Astrocyte of the cerebellum (primary cell): ENCODE measurements at regions of chr9 and their contacts with region 1.

Region 1: DNA sequence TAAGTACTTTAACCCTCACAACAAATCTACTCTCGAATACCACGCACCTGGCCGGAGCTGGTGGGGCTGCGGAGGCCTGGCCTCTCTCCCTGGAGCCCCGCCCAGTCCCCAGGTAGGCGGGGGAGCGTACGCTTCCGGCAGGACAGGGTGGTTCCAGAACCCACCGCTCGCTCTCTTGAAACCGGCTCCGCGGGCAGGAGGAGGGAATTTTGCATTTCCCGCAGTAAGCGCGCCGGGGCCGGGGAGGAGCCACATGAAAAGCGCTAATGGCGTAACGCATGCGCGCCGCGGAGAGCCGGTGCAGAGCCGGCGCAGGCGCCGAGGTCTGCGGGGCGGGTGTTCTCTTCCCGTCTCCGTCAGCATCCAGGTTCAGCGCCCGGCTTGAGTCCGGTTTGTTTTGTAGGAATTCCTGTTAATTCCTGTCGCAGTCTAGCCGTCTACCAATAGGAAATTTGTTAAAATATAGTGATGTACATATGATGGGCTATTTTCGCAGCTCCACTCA is 20.8 kb downstream of the CAVIN4 start:
- DNase-seq: no peak
- H3K4me3 ChIP-seq: peak overlapping the region; percentile 47
- CTCF ChIP-seq: no peak

Region 2: DNA sequence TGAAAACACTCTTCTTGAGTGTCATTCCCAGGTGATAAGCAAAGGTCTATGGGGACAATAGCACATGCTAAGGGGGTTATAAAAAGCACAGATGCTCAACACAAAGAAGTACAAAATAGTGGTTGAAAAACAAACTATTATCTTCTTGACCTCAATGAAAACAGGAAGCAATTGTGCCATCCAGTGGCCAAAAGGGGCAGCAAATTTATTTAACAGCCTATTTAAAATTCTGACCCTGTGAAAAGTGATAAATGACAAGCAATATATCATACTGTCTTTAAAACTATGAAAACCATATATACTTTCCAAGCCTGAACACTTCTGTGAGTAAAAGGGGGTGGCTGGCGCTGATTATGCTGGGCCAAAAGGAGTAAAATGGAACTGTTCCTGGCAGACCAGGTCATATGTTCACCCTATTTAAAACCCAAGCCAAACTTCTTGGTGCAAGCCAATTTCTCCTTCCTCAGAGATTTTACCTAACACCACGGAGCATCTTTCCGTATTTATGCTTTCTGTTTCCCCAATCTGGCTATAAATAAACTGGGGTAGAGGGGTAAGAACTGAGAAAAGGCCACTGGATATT is 275.6 kb before region 1 on chr9:
- in situ Hi-C with region 1: loop called (anchors 25 kb)
- DNase-seq: peak; percentile 38
- H3K4me3 ChIP-seq: no peak overlapping the region
- CTCF ChIP-seq: peak; percentile 68

Region 3: DNA sequence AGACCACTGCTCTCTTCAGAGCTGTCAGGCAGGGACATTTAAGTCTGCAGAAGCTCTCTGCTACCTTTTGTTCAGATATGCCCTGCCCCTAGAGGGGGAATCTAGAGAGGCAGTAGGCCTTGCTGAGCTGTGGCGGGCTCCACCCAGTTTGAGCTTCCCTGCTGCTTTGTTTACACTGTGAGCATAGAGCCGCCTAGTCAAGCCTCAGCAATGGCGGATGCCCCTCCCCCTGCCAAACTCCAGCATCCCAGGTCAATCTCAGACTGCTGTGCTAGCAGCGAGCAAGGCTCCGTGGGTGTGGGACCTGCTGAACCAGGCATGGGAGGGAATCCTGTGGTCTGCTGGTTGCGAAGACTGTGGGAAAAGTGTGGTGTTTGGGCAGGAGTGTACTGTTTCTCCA is 39.1 kb after region 1 on chr9:
- in situ Hi-C with region 1: no loop called
- DNase-seq: no peak
- H3K4me3 ChIP-seq: no peak overlapping the region
- CTCF ChIP-seq: no peak